WTC11 (cell line): ENCODE measurements at regions of chr20 and their contacts with region 1.

Region 1: DNA sequence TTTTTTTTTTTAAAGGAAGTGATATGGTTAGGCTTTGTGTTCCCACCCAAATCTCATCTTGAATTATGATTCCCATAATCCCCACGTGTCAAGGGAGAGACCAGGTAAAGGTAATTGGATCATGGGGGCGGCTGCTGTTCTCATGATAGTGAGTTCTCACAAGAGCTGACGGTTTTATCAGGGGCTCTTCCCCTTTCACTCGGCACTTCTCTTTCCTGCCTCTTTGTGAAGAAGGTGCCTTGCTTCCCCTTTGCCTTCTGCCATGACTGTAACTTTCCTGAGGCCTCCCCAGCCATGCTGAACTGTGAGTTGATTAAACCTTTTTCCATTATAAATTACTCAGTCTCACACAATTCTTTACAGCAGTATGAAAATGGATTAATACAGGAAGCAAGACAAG is 64.3 kb downstream of the ZFP64 start:
- DNase-seq: no peak
- ATAC-seq: no peak
- H3K4me3 Mint-ChIP-seq: no peak overlapping the region
- H3K27ac Mint-ChIP-seq: no peak overlapping the region
- H3K4me1 Mint-ChIP-seq: no peaks in the 10 kb centered on the region
- H3K27me3 Mint-ChIP-seq: peaks cover 2% of the 10 kb centered on the region; the same call in 1 of the 2 replicates
- CTCF ChIP-seq: no peak

Region 2: DNA sequence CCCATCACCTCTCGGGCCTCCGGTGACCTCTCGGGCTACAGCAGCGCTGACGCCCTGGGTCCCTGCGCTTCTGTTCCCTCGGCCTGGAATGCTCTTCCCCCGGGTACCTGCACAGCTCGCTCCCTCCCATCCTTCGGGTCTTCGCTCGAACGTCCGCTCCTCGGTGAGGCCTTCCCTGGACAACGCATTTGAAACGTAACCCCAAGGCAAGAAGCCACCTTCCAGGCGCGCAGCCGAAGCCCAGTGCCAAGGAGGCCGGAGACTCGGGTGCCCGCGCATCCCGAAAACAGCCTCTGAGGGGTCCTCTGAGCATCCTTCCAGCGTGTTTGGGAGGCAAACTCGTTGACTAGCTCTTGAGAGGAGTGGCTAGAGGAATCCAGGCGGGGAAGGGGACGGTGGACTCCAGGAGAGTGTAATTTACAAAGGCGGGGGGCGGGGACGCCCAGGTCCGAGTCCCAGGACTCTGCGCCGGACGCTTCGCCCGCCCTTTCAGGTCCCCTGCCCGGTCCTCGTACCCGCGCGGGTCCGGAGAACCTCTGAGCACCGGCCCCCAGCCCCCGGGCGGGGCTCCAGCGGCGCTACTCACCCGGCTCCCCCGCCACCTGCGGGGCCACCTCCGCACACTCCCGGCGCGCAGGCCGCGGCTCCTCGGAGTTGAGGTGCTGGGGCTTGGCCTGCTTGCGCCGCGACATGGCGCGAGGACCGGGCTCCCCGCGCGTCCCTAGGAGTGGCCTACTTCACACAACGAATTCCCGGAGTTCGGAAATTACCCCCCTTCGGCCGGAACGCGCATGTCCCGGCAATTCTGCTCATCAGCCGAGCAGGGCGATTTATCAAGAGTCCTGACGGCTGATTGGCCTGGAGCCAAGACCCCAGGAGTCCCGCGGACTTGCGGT is 22.5 kb before region 1 on chr20:
- CTCF ChIA-PET with region 1: interaction called, 36 read pairs
- POLR2A ChIA-PET with region 1: interaction called, 3 read pairs
- DNase-seq: peak; percentile 76
- ATAC-seq: peak; percentile 20
- H3K4me3 Mint-ChIP-seq: peak overlapping the region; percentile 87
- H3K27ac Mint-ChIP-seq: peak overlapping the region; percentile 97
- H3K4me1 Mint-ChIP-seq: peaks cover 27% of the 10 kb centered on the region
- H3K27me3 Mint-ChIP-seq: peaks cover 68% of the 10 kb centered on the region
- CTCF ChIP-seq: no peak

Region 3: GRCh38 chr20:52142757-52143156 is 15.4 kb after region 1 on chr20:
- CTCF ChIA-PET with region 1: interaction called, 22 read pairs
- POLR2A ChIA-PET with region 1: no interaction called
- DNase-seq: no peak
- ATAC-seq: no peak
- H3K4me3 Mint-ChIP-seq: no peak overlapping the region
- H3K27ac Mint-ChIP-seq: no peak overlapping the region
- H3K4me1 Mint-ChIP-seq: no peaks in the 10 kb centered on the region
- H3K27me3 Mint-ChIP-seq: no peaks in the 10 kb centered on the region
- CTCF ChIP-seq: no peak

Region 4: DNA sequence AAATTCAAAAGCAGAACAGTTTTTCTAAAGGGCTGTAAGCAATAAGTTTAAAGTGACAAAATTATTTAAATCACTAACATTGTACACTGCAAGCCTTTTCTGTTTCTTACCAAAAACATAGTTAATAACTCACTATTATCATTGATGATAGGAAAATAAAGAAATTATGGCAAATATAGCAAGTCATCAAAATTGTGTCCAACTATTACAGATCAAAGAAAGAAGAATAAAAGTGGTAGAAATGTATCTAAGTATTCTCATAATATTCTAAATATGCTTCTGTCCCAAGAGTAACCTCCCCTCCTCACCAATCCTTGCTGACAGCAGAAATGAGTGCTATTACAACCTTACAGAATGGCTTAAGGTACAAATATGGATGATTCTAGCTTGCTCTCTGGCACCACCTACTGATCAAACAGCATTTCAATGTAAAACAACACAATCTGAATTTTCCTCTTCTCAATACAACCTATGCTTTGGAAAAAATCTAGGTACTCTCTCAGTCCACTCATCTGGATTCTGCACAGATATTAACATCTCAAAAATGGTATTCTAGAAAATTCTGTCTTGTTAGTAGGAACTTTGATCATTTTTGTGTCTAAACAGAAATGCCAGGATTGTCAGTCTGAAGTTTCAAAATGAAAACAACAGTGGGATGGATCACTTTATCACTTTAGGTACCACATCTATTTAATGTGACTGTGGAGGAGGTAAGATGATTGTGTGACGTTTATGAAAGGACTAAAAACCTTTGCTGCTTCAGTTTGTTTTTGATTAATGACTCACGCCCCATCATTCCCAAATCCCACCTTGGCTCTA is 23.3 kb after region 1 on chr20:
- CTCF ChIA-PET with region 1: interaction called, 22 read pairs
- POLR2A ChIA-PET with region 1: no interaction called
- DNase-seq: no peak
- ATAC-seq: peak; percentile 30; the same call in 1 of the 2 replicates
- H3K4me3 Mint-ChIP-seq: no peak overlapping the region
- H3K27ac Mint-ChIP-seq: no peak overlapping the region
- H3K4me1 Mint-ChIP-seq: no peaks in the 10 kb centered on the region
- H3K27me3 Mint-ChIP-seq: no peaks in the 10 kb centered on the region
- CTCF ChIP-seq: peak; percentile 31; the same call in 1 of the 2 replicates

Region 5: DNA sequence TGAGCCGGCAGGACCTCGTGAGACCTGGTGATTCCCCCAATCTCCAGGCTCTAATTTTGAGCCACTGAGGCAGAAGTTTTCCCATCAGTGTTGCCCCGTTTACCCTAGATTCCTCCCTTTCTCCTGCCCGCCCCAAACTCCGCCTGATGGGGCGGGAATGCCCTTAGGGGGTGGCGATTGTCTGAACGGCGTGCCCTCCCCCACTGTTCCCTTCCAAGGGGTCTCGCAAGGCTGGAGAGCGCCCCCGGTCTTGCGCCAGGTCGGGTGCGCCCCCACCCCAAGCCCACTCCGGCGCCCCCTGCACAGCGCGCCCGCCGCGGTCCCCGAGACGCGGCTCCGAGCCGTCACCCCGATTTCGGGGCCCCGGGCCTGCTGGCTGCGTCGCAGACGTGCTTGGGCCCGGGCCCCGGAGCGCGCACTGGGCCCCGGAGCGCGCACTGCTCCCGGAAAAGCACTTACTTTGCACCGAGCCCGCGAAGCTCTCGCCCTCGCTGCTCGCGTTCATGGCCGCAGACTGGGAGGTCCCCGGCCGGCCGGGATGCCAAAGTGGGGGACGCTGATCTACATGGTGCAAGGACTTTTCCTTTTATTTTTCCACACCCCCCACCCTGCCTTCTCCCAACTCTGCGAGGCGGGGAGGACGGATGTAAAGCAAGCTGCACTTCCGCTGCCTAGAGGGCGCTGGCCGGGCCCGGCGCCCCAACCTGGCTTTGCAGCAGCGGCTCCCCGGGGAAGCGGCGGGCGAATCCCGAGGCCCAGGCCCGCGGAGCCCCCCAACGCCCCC is 64.0 kb after region 1 on chr20 and contains the start of gene ZFP64:
- CTCF ChIA-PET with region 1: interaction called, 10 read pairs
- POLR2A ChIA-PET with region 1: no interaction called
- DNase-seq: peak; percentile 71
- ATAC-seq: peak; percentile 69
- H3K4me3 Mint-ChIP-seq: peak within 1 kb of the TSS; percentile 93
- H3K27ac Mint-ChIP-seq: peak within 1 kb of the TSS; percentile 95
- H3K4me1 Mint-ChIP-seq: peaks cover 24% of the 10 kb centered on the region
- H3K27me3 Mint-ChIP-seq: no peaks in the 10 kb centered on the region
- CTCF ChIP-seq: no peak
- total RNA-seq, gene ZFP64: 26.1 to 32.4 TPM (median 29.4 TPM) in 3 replicates